BJ (cell line): ENCODE measurements at regions of chr6 and their contacts with region 1.

Region 1: GRCh38 chr6:163585932-163586437 is 171.5 kb downstream of the QKI start:
- DNase-seq: peak; percentile 51
- H3K4me3 ChIP-seq: no peak overlapping the region
- H3K27me3 ChIP-seq: no peaks in the 10 kb centered on the region
- CTCF ChIP-seq: no peak

Region 2: GRCh38 chr6:163419413-163420288 is 166.3 kb before region 1 on chr6:
- CTCF ChIA-PET with region 1: no interaction called
- POLR2A ChIA-PET with region 1: interaction called, 22 read pairs
- DNase-seq: no peak
- H3K4me3 ChIP-seq: peak overlapping the region; percentile 10
- H3K27me3 ChIP-seq: no peaks in the 10 kb centered on the region
- CTCF ChIP-seq: no peak

Region 3: GRCh38 chr6:163525926-163526325 is 60.1 kb before region 1 on chr6:
- CTCF ChIA-PET with region 1: no interaction called
- POLR2A ChIA-PET with region 1: no interaction called
- DNase-seq: no peak
- H3K4me3 ChIP-seq: no peak overlapping the region
- H3K27me3 ChIP-seq: no peaks in the 10 kb centered on the region
- CTCF ChIP-seq: no peak